ENCODE measurements at regions of chr3 and their contacts with region 1.

Region 1: DNA sequence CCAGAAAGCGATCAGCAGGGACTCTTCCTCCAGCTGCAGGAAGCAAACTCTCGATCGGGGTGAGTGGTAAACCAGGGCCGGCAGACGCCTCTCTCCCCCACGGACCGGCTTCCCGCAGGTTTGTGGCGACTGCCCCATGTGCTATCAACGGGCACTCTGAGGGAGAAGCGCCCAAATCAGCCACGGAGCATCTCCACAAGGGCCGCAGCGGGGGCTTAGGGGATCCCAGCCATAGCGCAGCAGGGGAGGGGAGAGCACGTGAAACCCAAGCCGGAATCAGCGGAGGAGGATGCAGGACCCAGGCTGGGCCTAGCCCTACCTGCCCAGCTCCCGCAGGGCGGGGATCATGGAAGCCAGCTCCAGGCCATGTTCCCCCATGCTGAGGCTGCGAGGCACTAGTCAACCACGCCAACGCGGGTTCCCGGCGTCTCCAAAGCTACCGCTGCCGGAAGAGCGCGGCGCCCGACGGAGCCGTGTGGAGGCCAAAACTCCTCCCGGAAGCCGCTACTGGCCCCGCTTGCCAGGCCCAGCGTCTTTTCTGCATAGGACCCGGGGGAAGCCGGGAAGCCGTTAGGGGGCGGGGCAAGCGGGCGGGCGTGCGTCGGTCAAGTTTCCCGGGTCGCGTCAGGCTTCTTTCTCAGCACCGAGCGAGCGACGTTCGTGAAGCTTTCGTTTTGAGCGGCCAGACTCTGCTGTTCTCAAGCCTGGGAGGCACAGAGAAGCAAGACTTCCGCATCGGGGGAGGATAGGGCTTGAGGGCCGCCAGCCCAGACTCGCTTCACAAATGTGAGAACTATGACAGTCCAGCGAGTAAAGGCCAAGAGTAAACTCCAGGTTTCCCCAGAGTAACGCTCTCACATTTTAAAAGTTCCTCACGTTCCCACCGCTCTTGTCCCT is at the start of gene ATR:
- DNase-seq: peak; percentile 97
- ATAC-seq: peak; percentile 94
- H3K4me3 ChIP-seq: peak within 1 kb of the TSS; percentile 70 to 91 (median 78)
- H3K4me3 Mint-ChIP-seq: peak within 1 kb of the TSS; percentile 93
- H3K27ac ChIP-seq: peak within 1 kb of the TSS; percentile 97 to 98
- H3K27ac Mint-ChIP-seq: peak within 1 kb of the TSS; percentile 98
- H3K4me1 ChIP-seq: peaks cover 27% of the 10 kb centered on the region in 2 donors
- H3K4me1 Mint-ChIP-seq: peaks cover 47% of the 10 kb centered on the region
- H3K27me3 ChIP-seq: peaks cover 0 to 7% (median 0%) of the 10 kb centered on the region in 4 experiments
- H3K27me3 Mint-ChIP-seq: peaks cover 9% of the 10 kb centered on the region
- CTCF ChIP-seq: no peak
- total RNA-seq, gene ATR: 46.7 and 47.4 TPM in 2 replicates

Region 2: DNA sequence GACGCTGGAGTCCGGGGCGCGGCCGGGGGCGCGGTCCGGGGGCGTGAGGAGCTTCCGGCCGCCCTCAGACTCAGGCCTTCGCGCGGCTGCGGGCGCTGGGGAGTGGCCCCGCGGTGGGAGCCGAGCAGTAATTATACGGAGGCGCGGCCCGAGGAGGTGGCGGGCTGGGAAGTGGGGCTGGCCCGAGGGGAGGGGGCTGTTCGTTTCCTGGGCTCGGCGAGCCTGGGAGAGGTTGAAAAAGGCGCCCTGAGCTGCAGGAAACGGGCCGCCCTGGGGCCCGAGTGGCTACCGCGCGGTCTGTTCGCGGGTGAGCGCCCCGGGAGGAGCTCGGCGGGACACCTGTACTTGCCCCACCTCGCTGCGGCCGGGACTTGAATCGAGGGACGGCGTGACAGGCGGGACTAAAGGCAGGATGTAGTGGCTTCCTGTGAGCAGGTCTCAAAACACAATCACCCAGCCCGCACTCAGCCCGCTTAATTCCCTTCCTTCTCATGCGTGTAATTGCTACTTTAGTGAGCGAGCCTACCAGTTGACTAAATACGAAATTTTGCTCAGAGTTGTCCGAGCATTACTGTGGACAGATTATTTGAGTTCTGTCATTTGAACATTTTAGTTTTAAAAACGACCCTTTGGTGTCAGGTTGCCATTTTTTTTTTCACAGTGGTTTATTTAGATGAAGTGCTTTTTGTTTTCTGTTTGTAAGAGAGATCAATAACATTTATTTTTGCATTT is 1090.9 kb before region 1 on chr3:
- CTCF ChIA-PET with region 1: no interaction called
- POLR2A ChIA-PET with region 1: no interaction called
- intact Hi-C with region 1: loop called (anchors 2 kb)
- DNase-seq: peak; percentile 91
- ATAC-seq: peak; percentile 70
- H3K4me3 ChIP-seq: peak overlapping the region; percentile 48 to 96 (median 67)
- H3K4me3 Mint-ChIP-seq: peak overlapping the region; percentile 88
- H3K27ac ChIP-seq: peak overlapping the region; percentile 83 to 91
- H3K27ac Mint-ChIP-seq: peak overlapping the region; percentile 93
- H3K4me1 ChIP-seq: peaks cover 45 to 66% of the 10 kb centered on the region in 2 donors
- H3K4me1 Mint-ChIP-seq: peaks cover 70% of the 10 kb centered on the region
- H3K27me3 ChIP-seq: no peaks in the 10 kb centered on the region
- H3K27me3 Mint-ChIP-seq: no peaks in the 10 kb centered on the region
- CTCF ChIP-seq: no peak

Region 3: GRCh38 chr3:142028243-142028777 is 550.3 kb before region 1 on chr3:
- CTCF ChIA-PET with region 1: no interaction called
- POLR2A ChIA-PET with region 1: no interaction called
- intact Hi-C with region 1: loop called (anchors 5 kb)
- DNase-seq: peak; percentile 73
- ATAC-seq: peak; percentile 69
- H3K4me3 ChIP-seq: peak overlapping the region; percentile 26 to 72 (median 56)
- H3K4me3 Mint-ChIP-seq: peak overlapping the region; percentile 90
- H3K27ac ChIP-seq: no peak overlapping the region
- H3K27ac Mint-ChIP-seq: peak overlapping the region; percentile 21
- H3K4me1 ChIP-seq: peaks cover 3% of the 10 kb centered on the region in 2 donors
- H3K4me1 Mint-ChIP-seq: peaks cover 24% of the 10 kb centered on the region
- H3K27me3 ChIP-seq: no peaks in the 10 kb centered on the region
- H3K27me3 Mint-ChIP-seq: no peaks in the 10 kb centered on the region
- CTCF ChIP-seq: no peak

Region 4: GRCh38 chr3:142226484-142226883 is 352.1 kb before region 1 on chr3:
- CTCF ChIA-PET with region 1: no interaction called
- POLR2A ChIA-PET with region 1: no interaction called
- intact Hi-C with region 1: loop called (anchors 1 kb)
- DNase-seq: no peak
- ATAC-seq: no peak
- H3K4me3 ChIP-seq: no peak overlapping the region
- H3K4me3 Mint-ChIP-seq: peak overlapping the region; percentile 70
- H3K27ac ChIP-seq: no peak overlapping the region
- H3K27ac Mint-ChIP-seq: peak overlapping the region; percentile 32
- H3K4me1 ChIP-seq: peaks cover 3 to 8% of the 10 kb centered on the region in 2 donors
- H3K4me1 Mint-ChIP-seq: peaks cover 9% of the 10 kb centered on the region
- H3K27me3 ChIP-seq: no peaks in the 10 kb centered on the region
- H3K27me3 Mint-ChIP-seq: no peaks in the 10 kb centered on the region
- CTCF ChIP-seq: no peak

Region 5: DNA sequence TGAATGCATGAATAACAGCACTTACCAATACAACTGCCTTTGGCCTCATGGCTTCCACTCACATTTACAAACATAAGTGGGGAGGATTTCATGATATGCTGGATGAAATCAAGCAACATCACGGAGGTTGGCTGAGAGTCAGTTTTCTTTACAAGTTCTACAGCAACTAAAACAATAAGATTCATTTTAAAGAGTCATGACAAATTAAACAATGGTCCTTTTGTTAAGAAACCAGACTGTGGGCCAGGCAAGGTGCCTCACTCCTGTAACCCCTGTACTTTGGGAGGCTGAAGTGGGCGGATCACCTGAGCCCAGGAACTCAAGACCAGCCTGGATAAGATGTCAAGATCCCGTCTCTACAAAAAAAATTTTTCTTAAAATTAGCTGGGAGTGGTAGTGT is 12.5 kb before region 1 on chr3:
- CTCF ChIA-PET with region 1: no interaction called
- POLR2A ChIA-PET with region 1: no interaction called
- intact Hi-C with region 1: no loop called
- DNase-seq: no peak
- ATAC-seq: no peak
- H3K4me3 ChIP-seq: no peak overlapping the region
- H3K4me3 Mint-ChIP-seq: no peak overlapping the region
- H3K27ac ChIP-seq: no peak overlapping the region
- H3K27ac Mint-ChIP-seq: no peak overlapping the region
- H3K4me1 ChIP-seq: no peaks in the 10 kb centered on the region
- H3K4me1 Mint-ChIP-seq: peaks cover 6% of the 10 kb centered on the region
- H3K27me3 ChIP-seq: no peaks in the 10 kb centered on the region
- H3K27me3 Mint-ChIP-seq: no peaks in the 10 kb centered on the region
- CTCF ChIP-seq: no peak

Region 6: DNA sequence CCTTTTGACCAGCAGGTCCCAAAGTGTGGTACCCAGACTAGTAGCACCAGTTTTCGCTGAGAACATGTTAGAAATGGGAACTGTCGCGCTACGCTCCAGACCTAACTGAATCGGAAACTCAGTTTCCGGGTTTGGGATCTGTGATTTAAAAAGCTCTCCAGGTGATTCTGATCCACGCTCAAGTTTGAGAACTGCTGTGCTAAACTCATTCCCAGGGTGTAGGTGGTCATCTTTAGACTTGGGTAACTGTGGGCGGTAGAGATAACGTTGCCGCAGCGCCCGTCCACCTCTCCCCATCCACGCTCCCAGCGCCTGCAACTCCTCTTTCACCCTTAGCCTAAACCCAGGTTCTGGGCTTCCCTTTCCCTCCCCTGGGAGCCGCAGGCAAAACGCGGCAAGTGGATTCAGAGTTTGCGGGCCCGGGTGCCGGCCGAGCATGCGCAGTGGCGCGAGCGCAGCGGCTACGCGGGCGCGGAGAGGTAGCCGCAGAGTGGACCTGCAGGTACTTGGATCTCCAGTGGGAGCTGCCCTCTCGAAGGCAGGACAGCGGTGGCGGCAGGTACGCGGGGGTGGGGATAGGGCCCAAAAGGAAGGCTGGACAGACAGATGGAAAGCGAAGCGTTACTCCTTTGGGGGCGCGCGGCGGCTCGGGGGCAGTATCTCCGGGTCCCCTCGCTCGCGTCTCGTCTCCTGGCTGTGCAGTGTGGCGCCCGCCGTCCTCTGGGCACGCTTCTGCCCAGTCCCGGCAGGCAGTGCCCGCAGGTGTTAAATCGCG is 17.6 kb after region 1 on chr3 and contains the start of gene PLS1:
- CTCF ChIA-PET with region 1: interaction called, 5 read pairs
- POLR2A ChIA-PET with region 1: interaction called, 6 read pairs
- intact Hi-C with region 1: loop called (anchors 1 kb)
- DNase-seq: peak; percentile 87
- ATAC-seq: peak; percentile 87
- H3K4me3 ChIP-seq: peak within 1 kb of the TSS; percentile 68 to 77 (median 72)
- H3K4me3 Mint-ChIP-seq: peak within 1 kb of the TSS; percentile 99
- H3K27ac ChIP-seq: peak within 1 kb of the TSS in 1 of 2 donors; percentile 27
- H3K27ac Mint-ChIP-seq: peak within 1 kb of the TSS; percentile 87
- H3K4me1 ChIP-seq: peaks cover 10 to 15% of the 10 kb centered on the region in 2 donors
- H3K4me1 Mint-ChIP-seq: peaks cover 19% of the 10 kb centered on the region
- H3K27me3 ChIP-seq: peaks cover 0 to 7% (median 2%) of the 10 kb centered on the region in 4 experiments
- H3K27me3 Mint-ChIP-seq: peaks cover 12% of the 10 kb centered on the region
- CTCF ChIP-seq: no peak
- total RNA-seq, gene PLS1: 0.73 and 0.74 TPM in 2 replicates

Region 7: GRCh38 chr3:142618917-142619461 is 40.4 kb after region 1 on chr3:
- CTCF ChIA-PET with region 1: no interaction called
- POLR2A ChIA-PET with region 1: no interaction called
- intact Hi-C with region 1: no loop called
- DNase-seq: no peak
- ATAC-seq: no peak
- H3K4me3 ChIP-seq: no peak overlapping the region
- H3K4me3 Mint-ChIP-seq: no peak overlapping the region
- H3K27ac ChIP-seq: no peak overlapping the region
- H3K27ac Mint-ChIP-seq: no peak overlapping the region
- H3K4me1 ChIP-seq: no peaks in the 10 kb centered on the region
- H3K4me1 Mint-ChIP-seq: no peaks in the 10 kb centered on the region
- H3K27me3 ChIP-seq: no peaks in the 10 kb centered on the region
- H3K27me3 Mint-ChIP-seq: no peaks in the 10 kb centered on the region
- CTCF ChIP-seq: no peak

Region 8: DNA sequence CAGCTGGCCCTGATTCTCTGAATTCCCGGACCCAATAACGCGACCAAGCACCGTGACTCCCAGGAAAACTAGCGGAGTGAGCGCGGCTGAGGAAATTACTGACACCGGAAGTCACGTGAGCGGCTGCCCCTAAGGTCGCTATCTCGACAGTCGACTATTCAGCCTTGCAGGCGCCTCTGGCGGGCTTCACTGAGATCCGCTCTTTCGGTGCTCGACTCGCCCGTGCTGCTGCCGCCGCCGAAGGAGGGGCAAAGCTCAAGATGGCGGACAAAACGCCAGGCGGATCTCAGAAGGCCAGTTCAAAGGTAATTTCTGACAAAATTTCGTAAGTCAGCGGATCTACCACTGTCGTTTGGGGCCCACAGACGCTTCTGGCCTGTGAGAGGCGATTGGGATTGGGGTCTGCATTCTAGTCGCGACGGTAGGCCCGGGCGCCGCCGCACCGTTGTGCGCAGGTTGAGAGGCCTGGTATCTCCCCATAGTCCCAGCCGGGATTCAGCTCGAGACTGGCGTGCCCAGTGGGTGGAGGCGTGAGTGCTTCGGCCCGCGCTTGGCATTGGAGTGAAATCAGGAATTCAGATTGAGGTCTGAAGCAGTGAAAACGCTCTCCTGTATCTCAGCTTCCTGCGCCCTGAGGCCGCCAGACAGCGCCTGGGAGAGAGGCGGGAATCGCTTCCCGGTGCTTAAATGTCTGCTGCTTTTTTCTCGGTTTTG is 423.0 kb after region 1 on chr3 and contains the start of gene U2SURP:
- CTCF ChIA-PET with region 1: interaction called, 13 read pairs
- POLR2A ChIA-PET with region 1: interaction called, 9 read pairs
- intact Hi-C with region 1: loop called (anchors 1 kb)
- DNase-seq: peak; percentile 95
- ATAC-seq: peak; percentile 96
- H3K4me3 ChIP-seq: peak within 1 kb of the TSS; percentile 73 to 100 (median 97)
- H3K4me3 Mint-ChIP-seq: peak within 1 kb of the TSS; percentile 96
- H3K27ac ChIP-seq: peak within 1 kb of the TSS; percentile 86 to 98
- H3K27ac Mint-ChIP-seq: peak within 1 kb of the TSS; percentile 96
- H3K4me1 ChIP-seq: peaks cover 19 to 20% of the 10 kb centered on the region in 2 donors
- H3K4me1 Mint-ChIP-seq: peaks cover 34% of the 10 kb centered on the region
- H3K27me3 ChIP-seq: no peaks in the 10 kb centered on the region
- H3K27me3 Mint-ChIP-seq: no peaks in the 10 kb centered on the region
- CTCF ChIP-seq: no peak
- total RNA-seq, gene U2SURP: 138 and 169 TPM in 2 replicates

Measured in B cell (primary cell).